OCI-LY7 (cell line): ENCODE measurements at regions of chr19 and their contacts with region 1.

Region 1: DNA sequence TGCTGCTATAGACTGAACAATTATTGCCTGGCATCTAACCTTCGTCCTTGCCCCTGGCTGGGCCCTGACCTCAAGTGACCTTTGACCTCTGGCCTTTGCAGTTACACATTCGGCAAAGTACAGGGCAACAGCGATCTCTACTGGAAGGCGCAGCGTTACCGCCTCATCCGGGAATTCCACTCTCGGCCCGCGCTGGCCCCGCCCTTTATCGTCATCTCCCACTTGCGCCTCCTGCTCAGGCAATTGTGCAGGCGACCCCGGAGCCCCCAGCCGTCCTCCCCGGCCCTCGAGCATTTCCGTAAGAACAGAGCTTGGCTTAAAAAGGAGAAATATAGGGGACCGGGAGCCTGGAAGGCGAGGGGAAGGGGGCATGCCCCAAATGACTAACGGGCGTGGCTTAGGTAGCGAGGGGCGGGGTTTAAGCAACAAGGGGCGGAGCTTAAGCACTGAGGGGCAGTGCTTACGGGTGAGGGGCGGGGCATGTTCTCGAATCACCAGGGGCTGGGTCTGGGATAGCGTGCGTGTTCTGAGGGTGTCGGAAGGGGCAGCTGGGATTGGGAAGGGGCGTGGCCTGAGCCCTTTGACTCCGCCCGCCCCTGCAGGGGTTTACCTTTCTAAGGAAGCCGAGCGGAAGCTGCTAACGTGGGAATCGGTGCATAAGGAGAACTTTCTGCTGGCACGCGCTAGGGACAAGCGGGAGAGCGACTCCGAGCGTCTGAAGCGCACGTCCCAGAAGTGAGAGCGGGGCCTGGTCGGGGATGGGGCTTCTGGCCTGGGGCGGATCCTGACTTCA is 52.7 kb downstream of the TRPM4 start:
- DNase-seq: peak; percentile 61
- H3K4me3 ChIP-seq: no peak overlapping the region
- H3K27ac ChIP-seq: no peak overlapping the region
- H3K4me1 ChIP-seq: peaks cover 55% of the 10 kb centered on the region
- CTCF ChIP-seq: no peak

Region 2: DNA sequence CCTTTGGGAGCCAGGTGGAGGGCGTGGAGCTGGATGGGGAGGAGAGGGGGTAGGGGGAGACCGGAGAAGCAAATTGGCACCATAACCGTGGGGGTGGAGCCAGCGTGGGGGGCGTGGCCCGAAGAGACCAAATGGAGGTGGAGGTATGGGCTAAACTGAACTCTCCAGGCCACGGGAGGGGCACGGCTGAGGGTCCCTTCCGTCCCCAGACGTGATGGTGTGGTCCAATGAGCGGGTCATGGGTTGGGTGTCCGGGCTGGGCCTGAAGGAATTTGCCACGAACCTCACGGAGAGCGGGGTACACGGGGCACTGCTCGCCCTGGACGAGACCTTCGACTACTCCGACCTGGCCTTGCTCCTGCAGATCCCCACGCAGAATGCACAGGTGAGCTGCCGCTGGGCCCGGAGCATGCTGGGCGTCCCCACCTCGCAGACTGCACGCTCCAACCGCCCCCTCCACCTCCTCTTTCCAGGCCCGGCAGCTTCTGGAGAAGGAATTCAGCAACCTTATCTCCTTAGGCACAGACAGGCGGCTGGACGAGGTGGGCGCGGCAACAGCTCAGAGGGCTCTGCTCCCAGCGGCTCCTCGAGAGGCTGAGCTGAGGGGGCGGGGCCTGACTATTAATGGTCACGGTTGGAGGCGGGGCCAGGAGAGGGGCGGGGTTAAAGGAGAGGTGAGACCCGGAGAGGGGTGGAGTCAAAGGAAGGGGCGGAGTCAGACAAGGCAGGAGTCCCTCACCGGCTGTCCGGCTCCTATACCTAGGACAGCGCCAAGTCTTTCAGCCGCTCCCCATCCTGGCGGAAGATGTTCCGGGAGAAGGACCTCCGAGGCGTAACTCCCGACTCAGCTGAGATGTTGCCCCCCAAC is 61.3 kb before region 1 on chr19:
- CTCF ChIA-PET with region 1: no interaction called
- POLR2A ChIA-PET with region 1: no interaction called
- intact Hi-C with region 1: loop called (anchors 2 kb)
- DNase-seq: peak; percentile 96
- H3K4me3 ChIP-seq: peak overlapping the region; percentile 83
- H3K27ac ChIP-seq: peak overlapping the region; percentile 36
- H3K4me1 ChIP-seq: peaks cover 32% of the 10 kb centered on the region
- CTCF ChIP-seq: no peak

Region 3: DNA sequence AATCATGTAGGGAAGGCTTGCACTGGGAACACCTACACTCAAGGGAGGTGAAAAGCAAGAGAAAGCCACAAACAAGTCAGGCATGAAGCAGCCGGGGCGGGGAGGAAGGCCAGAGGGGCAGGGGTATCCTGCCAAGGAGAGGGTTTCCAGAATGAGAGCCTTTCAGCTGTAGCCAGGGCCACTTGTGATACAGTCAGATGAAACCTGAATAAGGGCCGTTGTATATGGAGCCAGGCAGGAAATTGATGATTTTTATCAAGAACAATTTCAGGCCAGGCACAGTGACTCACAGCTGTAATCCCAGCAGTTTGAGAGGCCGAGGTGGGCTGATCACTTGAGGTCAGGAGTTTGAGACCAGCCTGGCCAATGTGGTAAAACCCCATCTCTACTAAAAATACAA is 48.3 kb before region 1 on chr19:
- CTCF ChIA-PET with region 1: no interaction called
- POLR2A ChIA-PET with region 1: no interaction called
- intact Hi-C with region 1: no loop called
- DNase-seq: no peak
- H3K4me3 ChIP-seq: no peak overlapping the region
- H3K27ac ChIP-seq: no peak overlapping the region
- H3K4me1 ChIP-seq: no peaks in the 10 kb centered on the region
- CTCF ChIP-seq: no peak

Region 4: GRCh38 chr19:49231389-49231788 is 21.1 kb after region 1 on chr19:
- CTCF ChIA-PET with region 1: no interaction called
- POLR2A ChIA-PET with region 1: no interaction called
- intact Hi-C with region 1: no loop called
- DNase-seq: no peak
- H3K4me3 ChIP-seq: no peak overlapping the region
- H3K27ac ChIP-seq: no peak overlapping the region
- H3K4me1 ChIP-seq: peaks cover 7% of the 10 kb centered on the region
- CTCF ChIP-seq: no peak

Region 5: GRCh38 chr19:49264258-49264657 is 54.0 kb after region 1 on chr19:
- CTCF ChIA-PET with region 1: no interaction called
- POLR2A ChIA-PET with region 1: no interaction called
- intact Hi-C with region 1: no loop called
- DNase-seq: no peak
- H3K4me3 ChIP-seq: no peak overlapping the region
- H3K27ac ChIP-seq: no peak overlapping the region
- H3K4me1 ChIP-seq: no peaks in the 10 kb centered on the region
- CTCF ChIP-seq: no peak

Region 6: DNA sequence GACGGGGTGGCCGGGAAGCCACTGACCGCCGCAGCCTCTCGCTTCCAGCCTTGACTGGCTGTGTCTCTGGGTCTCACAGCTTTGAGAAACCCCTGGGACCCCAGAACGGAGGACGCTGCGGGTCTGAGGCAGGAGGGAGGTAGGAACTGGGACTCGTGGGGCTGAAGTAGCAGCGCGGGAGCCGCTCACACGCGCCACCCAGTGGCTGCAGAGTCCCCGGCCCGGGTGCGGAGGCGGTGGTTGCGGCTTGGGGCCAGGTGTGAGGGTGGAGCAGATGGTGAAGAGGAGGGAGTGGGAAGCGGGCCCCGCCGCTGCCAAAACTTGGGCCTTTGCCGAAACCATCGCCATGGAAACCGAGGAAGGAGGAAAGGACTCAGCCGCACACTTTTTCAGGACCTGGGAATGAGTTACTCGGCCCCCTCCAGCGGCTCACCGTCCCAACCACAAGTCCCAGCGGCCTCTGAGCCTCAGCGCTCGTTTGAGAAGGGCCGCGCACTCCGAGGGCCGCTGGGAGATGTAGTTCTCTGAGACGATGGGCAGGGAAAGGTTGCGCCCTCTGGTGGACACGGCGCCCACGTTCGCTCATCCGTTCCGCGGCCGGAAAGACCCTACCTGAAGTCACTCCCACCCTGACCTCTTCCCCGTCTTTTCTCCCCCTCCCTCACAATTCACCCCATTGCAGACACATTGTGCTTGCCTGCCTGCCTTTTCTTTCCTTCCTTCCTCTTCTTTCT is 233.2 kb after region 1 on chr19:
- CTCF ChIA-PET with region 1: no interaction called
- POLR2A ChIA-PET with region 1: no interaction called
- intact Hi-C with region 1: no loop called
- DNase-seq: peak; percentile 97
- H3K4me3 ChIP-seq: peak overlapping the region; percentile 71
- H3K27ac ChIP-seq: peak overlapping the region; percentile 61
- H3K4me1 ChIP-seq: peaks cover 6% of the 10 kb centered on the region
- CTCF ChIP-seq: peak; percentile 89